ENCODE measurements at regions of chr6 and their contacts with region 1.

Region 1: GRCh38 chr6:119349323-119350042 is at the start of gene MAN1A1:
- DNase-seq: peak; percentile 94
- H3K4me3 ChIP-seq: peak within 1 kb of the TSS; percentile 96
- H3K27ac ChIP-seq: peak within 1 kb of the TSS; percentile 89
- H3K4me1 ChIP-seq: peaks cover 44% of the 10 kb centered on the region
- CTCF ChIP-seq: no peak
- total RNA-seq, gene MAN1A1: 72.4 and 74.2 TPM in 2 replicates

Region 2: DNA sequence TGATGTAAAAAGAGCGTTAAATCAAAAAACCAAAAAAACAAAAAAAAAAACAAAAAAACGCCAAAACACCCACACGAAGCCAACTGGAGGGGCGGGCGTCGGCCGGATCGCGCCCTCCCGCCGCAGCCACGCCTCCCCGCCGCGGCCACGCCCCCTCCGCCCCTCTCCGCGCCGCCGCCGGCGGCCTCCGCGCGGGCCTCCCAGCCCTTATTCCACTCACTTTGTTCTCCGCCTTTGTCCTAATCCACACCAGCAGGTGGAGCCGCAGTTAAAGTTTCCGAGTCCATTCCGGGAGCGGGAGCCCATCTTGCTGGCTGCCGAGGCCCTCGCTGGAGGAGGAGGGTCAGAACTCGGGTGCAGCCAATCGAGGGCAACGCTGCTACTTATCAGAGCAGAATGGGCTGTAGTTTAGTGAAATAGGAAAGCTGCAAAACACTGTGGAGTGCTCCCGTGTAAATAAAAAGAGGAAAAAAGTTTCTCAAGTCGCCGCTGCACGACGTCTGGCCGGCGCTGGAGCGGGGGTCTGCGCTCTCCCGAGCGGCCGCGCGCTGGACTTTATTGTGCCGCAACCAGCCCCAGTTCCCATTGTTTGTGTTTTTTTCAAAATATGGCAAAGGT is 455.6 kb before region 1 on chr6 and contains the start of gene ASF1A:
- CTCF ChIA-PET with region 1: no interaction called
- POLR2A ChIA-PET with region 1: interaction called, 3 read pairs
- intact Hi-C with region 1: loop called (anchors 2 kb)
- DNase-seq: peak; percentile 97
- H3K4me3 ChIP-seq: peak within 1 kb of the TSS; percentile 80
- H3K27ac ChIP-seq: peak within 1 kb of the TSS; percentile 89
- H3K4me1 ChIP-seq: peaks cover 60% of the 10 kb centered on the region
- CTCF ChIP-seq: peak; percentile 68
- total RNA-seq, gene ASF1A: 19.8 and 37.3 TPM in 2 replicates

Region 3: DNA sequence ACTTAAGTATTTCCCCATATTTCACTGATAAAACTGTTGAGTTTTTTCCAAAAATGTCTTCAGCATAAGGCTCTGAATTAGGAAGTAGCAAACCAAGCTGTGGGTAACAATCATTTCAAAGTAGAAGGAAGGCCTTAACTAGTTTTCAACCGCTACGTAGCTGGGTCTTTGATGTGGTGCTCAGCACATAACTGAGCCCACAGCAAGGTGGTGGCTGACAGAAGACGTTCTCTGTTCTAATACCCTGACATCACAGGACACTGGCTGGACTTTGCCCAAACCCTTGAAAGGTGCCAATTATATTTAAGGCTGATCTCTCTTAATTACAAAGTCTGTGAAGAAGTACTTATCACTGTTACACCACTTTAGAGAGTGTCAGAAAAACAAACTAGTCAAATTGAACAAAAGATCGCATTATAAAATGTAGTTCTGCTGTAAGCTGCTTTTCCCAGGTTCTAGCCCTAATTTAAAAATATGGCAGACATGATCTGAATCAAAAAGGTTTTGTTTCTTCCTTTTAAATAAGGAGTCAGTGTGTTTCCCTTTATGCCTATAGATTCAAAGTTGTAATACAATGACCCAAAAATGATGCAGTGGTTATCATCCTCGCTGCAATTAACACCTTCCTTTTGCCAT is 26.6 kb before region 1 on chr6:
- CTCF ChIA-PET with region 1: no interaction called
- POLR2A ChIA-PET with region 1: no interaction called
- intact Hi-C with region 1: no loop called
- DNase-seq: no peak
- H3K4me3 ChIP-seq: no peak overlapping the region
- H3K27ac ChIP-seq: no peak overlapping the region
- H3K4me1 ChIP-seq: no peaks in the 10 kb centered on the region
- CTCF ChIP-seq: no peak

Region 4: DNA sequence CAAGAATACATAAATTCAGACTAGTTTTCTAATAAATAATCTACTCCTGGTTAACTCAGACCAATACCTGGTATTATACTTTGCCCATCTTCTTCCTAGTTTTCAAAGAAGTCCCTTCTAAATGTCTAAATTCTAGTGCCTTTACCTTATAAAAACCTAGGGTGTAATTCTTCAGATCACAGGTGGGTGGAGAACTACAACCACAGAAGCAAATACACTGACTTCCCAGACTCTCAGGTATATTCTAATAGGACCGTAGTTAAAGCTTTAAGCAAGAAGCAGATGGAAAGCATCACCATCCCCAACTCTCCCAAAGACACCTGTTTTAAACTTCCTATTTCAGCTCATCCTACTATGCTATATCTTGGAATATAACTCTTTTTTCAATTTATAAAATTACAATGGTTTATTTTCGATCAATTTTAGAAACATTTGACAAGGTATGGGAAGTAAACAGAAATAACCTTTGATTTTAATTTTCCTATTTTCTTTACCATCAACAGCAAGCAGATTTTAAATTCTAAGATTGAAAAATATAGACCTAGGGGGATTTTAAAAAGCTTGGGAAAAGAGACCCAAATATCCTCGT is 15.7 kb before region 1 on chr6:
- CTCF ChIA-PET with region 1: interaction called, 6 read pairs
- POLR2A ChIA-PET with region 1: interaction called, 55 read pairs
- intact Hi-C with region 1: no loop called
- DNase-seq: peak; percentile 51
- H3K4me3 ChIP-seq: no peak overlapping the region
- H3K27ac ChIP-seq: no peak overlapping the region
- H3K4me1 ChIP-seq: peaks cover 71% of the 10 kb centered on the region
- CTCF ChIP-seq: peak; percentile 81

Region 5: DNA sequence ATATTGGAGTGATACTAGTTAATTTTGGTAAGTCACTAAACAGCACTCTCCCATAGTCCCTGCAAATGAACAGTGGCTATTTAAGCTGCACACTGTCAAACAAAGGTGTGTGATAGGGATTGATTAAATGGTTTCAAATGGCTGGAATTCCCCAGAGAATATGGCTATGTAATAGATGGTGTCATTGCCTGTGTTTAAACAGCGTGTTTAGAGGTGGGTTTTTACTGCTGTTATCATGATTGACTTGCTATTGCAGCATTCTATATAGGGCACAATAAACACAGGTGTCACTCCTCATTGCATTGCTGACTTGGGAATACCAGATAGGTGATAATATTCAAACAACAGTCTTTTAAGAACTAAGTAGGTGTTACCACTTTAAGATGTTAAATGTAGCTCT is 171.8 kb after region 1 on chr6:
- CTCF ChIA-PET with region 1: no interaction called
- POLR2A ChIA-PET with region 1: interaction called, 16 read pairs
- intact Hi-C with region 1: loop called (anchors 2 kb)
- DNase-seq: no peak
- H3K4me3 ChIP-seq: no peak overlapping the region
- H3K27ac ChIP-seq: peak overlapping the region; percentile 96
- H3K4me1 ChIP-seq: peaks cover 72% of the 10 kb centered on the region
- CTCF ChIP-seq: no peak

Region 6: GRCh38 chr6:119594907-119595306 is 245.4 kb after region 1 on chr6:
- CTCF ChIA-PET with region 1: no interaction called
- POLR2A ChIA-PET with region 1: no interaction called
- intact Hi-C with region 1: no loop called
- DNase-seq: no peak
- H3K4me3 ChIP-seq: no peak overlapping the region
- H3K27ac ChIP-seq: no peak overlapping the region
- H3K4me1 ChIP-seq: peaks cover under 1% of the 10 kb centered on the region
- CTCF ChIP-seq: no peak

Region 7: DNA sequence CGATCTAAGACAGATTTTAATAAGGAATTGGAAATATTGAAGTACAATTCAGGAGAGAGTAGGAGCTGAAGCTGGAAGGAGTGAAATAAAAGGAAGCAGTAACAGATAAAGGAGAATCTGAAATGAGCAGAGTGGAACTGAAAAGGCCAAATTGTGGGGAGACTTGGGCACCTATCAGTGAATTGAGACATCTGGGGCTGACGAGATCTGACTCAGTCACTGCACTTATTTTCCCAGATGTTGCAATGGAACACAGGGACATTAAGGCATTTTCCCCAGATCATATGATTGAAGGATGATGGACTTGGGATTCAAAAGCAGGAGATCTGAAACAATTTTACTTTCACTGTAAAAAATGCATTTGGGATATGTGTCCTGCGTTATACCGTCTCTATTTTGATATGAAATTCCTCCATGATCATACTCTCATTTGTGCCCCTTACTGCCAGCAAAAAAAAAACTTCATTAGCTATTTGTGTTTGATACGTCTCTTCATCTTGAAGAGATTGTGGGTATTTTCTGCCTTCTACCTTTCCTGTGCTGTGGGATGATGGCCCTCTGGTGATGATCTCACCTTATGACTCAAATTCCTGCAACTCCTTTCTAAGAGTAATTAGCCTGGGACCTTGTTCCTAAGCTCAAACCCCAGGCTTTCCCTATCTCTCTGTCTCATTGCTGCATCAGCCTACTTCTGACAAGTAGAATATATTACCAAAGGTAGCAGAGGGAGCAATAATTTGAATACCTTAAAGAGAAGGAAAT is 278.6 kb after region 1 on chr6:
- CTCF ChIA-PET with region 1: no interaction called
- POLR2A ChIA-PET with region 1: no interaction called
- intact Hi-C with region 1: loop called (anchors 5 kb)
- DNase-seq: no peak
- H3K4me3 ChIP-seq: no peak overlapping the region
- H3K27ac ChIP-seq: no peak overlapping the region
- H3K4me1 ChIP-seq: peaks cover 3% of the 10 kb centered on the region
- CTCF ChIP-seq: peak; percentile 33; the same call in 1 of the 2 replicates

Region 8: GRCh38 chr6:119966486-119966885 is 617.0 kb after region 1 on chr6:
- CTCF ChIA-PET with region 1: no interaction called
- POLR2A ChIA-PET with region 1: no interaction called
- intact Hi-C with region 1: loop called (anchors 5 kb)
- DNase-seq: peak; percentile 66
- H3K4me3 ChIP-seq: no peak overlapping the region
- H3K27ac ChIP-seq: no peak overlapping the region
- H3K4me1 ChIP-seq: no peaks in the 10 kb centered on the region
- CTCF ChIP-seq: peak; percentile 78

Region 9: GRCh38 chr6:120077489-120077888 is 728.0 kb after region 1 on chr6:
- CTCF ChIA-PET with region 1: no interaction called
- POLR2A ChIA-PET with region 1: no interaction called
- intact Hi-C with region 1: loop called (anchors 5 kb)
- DNase-seq: peak; percentile 29
- H3K4me3 ChIP-seq: no peak overlapping the region
- H3K27ac ChIP-seq: no peak overlapping the region
- H3K4me1 ChIP-seq: no peaks in the 10 kb centered on the region
- CTCF ChIP-seq: peak; percentile 60

Region 10: DNA sequence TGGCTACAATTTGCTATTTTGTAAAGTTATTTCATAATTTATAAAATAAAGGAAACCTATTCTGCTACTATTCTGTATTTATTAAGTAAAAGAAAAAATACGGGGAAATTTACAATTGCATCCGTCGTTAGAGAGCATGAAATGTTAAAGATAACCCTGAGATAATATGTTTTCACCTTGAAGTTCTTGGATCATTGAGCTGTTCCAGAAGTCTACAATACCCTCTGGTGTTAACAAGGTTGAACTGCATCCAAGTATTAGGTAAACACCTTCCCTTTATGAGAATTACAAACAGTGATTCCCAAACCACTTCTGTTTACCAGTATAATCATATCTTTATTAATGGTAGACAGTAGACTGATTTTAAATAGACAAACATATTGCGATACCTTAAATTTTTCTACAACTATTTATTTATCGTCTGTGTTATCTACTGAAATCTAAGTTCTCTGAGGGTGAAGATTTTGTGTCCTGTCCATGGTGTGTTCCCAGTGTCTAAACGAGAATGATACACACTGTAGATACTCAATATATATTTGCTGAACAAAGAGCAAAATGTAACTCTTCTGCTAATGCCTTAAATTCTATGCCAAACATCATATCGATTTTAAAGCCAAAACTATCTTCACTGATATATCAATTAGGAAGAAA is 1956.6 kb after region 1 on chr6:
- CTCF ChIA-PET with region 1: no interaction called
- POLR2A ChIA-PET with region 1: no interaction called
- intact Hi-C with region 1: no loop called
- DNase-seq: peak; percentile 30
- H3K4me3 ChIP-seq: no peak overlapping the region
- H3K27ac ChIP-seq: no peak overlapping the region
- H3K4me1 ChIP-seq: no peaks in the 10 kb centered on the region
- CTCF ChIP-seq: peak; percentile 73

Measured in OCI-LY7 (cell line).